Activated CD4-positive, alpha-beta T cell treated with anti-CD3 and anti-CD28 coated beads for 36 hours (primary cell): ENCODE measurements at regions of chr1 and their contacts with region 1.

Region 1: DNA sequence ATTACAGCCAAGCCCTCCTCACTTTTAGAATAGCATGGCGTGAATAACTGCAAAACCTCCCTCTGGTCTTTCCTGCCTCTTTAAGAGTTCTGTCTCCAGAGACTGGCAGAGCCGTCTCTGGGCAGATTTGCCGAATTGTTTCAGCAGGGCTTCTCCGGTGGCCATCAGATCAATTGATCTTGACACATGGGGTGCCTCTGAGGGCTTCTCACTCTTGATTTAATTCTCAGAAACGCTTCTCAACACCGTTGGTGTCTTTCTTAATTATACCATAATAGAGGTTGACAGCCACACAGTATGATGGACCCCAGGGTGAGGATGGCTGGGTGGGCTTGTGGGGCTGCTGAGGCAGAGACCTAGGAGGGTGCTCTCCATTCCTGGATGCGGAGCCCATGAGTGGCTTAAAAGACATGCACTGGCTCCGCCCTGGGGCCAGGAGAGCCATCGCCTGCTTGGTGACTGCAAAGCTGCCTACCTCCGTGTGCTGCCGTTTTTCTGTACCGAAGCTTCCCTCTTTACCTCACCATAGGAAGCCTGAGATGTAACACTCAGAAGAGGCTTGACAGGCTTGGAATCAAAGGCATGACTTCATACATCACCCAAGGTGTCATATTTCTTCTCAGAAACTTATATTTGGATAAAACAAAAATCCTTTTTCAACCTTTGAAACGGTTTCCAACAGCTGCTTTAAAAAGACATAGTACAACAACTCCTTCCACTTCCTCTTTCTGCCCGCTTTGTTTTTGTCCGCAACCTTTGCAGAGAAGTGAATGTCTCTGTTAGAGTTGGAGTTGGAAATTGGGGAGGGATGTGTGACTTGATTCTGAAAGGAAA is 82.9 kb downstream of the GALNT2 start:
- DNase-seq: peak; percentile 32
- ATAC-seq: peak; percentile 70
- H3K4me3 Mint-ChIP-seq: no peak overlapping the region
- H3K27ac Mint-ChIP-seq: no peak overlapping the region
- H3K4me1 Mint-ChIP-seq: peaks cover 39% of the 10 kb centered on the region
- H3K27me3 Mint-ChIP-seq: no peaks in the 10 kb centered on the region

Region 2: DNA sequence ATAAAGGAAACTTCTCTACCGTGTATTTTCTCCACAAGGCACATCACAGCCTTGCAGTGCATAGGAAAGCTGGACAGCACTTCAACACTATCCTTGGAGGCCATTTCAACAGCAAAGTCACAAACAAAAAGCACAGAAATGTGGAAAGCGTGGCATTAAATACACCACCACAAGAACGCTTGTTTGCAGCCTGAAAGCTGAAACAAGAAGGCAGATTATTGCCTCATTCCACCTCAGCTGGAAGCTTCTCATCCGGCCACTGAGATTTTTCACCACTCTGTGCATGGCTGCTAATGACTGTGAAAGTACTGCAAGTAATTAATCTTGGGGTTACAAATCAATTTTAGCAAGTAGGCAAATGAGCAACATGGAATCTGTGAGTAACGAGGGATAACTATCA is 133.8 kb before region 1 on chr1:
- CTCF ChIA-PET with region 1: no interaction called
- POLR2A ChIA-PET with region 1: no interaction called
- intact Hi-C with region 1: loop called in 1 of 2 experiments (anchors 5 kb)
- DNase-seq: no peak
- ATAC-seq: no peak
- H3K4me3 Mint-ChIP-seq: no peak overlapping the region
- H3K27ac Mint-ChIP-seq: no peak overlapping the region
- H3K4me1 Mint-ChIP-seq: no peaks in the 10 kb centered on the region
- H3K27me3 Mint-ChIP-seq: peaks cover 2% of the 10 kb centered on the region